ENCODE measurements at regions of chr3 and their contacts with region 1.

Region 1: DNA sequence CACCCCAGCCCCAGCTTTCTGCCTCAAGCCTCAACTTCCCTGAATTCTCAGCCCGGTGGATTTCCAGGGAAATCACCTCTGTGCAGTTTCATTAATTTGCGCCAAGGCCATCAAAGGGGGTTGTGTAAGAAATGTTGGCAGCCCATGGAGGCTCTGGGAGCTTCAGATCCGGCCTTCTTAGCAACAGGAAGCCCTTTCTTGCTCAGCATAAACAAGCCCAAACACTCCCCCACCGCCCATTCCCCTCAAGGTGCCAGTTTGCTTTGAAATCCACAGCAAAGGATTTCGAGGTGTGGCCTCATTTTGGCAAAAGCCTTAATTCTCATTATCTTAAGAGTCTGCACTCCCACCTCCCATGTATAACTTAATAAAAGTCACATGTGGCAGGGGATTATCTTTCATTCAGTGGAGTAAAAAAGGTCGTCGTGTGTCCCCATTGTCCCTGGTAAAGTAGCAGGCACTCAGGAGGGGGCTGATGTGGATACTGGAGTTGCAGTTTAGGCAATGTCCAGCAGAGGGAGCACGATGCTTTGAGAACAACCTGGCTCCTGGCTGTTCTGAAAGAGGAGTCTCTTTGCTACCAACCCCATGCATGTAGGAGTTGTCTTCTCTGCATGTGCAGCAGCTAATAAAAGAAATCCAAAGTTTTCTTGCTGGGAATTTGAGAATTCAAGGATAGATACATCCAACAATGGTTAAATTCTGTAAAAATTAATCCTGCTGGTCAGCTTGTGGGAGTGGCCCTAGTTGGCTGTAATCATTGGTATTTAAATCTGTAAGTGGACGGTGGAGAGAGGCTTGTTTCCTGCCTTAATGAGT is 39.5 kb downstream of the EBLN2 start:
- DNase-seq: peak; percentile 89
- H3K4me3 ChIP-seq: no peak overlapping the region
- H3K27ac ChIP-seq: no peak overlapping the region
- H3K4me1 ChIP-seq: no peaks in the 10 kb centered on the region
- H3K27me3 ChIP-seq: no peaks in the 10 kb centered on the region
- CTCF ChIP-seq: peak; percentile 94

Region 2: GRCh38 chr3:72903004-72903403 is 197.9 kb before region 1 on chr3:
- intact Hi-C with region 1: no loop called
- DNase-seq: no peak
- H3K4me3 ChIP-seq: no peak overlapping the region
- H3K27ac ChIP-seq: no peak overlapping the region
- H3K4me1 ChIP-seq: no peaks in the 10 kb centered on the region
- H3K27me3 ChIP-seq: no peaks in the 10 kb centered on the region
- CTCF ChIP-seq: no peak

Region 3: GRCh38 chr3:73319179-73319769 is 218.3 kb after region 1 on chr3:
- intact Hi-C with region 1: no loop called
- DNase-seq: peak; percentile 49
- H3K4me3 ChIP-seq: no peak overlapping the region
- H3K27ac ChIP-seq: no peak overlapping the region
- H3K4me1 ChIP-seq: no peaks in the 10 kb centered on the region
- H3K27me3 ChIP-seq: no peaks in the 10 kb centered on the region
- CTCF ChIP-seq: no peak

Region 4: DNA sequence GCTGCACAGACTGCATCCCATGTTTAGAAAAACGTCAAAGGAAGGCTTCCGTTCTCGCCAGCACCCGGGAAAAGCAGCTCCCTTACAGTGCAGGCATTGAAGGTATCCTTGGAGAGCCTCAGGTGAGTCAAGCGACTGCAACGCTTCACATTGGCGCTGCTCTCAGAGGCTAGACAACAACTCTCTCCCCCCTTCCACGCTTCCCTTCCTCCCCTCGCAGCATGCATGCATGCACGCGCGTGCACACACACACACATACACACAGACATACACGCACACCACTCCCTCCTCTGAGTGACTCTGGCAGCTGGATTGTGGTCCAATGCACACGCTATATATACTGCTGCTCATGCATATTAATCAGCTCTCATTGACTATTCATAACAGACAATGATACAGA is 332.7 kb after region 1 on chr3:
- intact Hi-C with region 1: loop called (anchors 2 kb)
- DNase-seq: no peak
- H3K4me3 ChIP-seq: no peak overlapping the region
- H3K27ac ChIP-seq: no peak overlapping the region
- H3K4me1 ChIP-seq: no peaks in the 10 kb centered on the region
- H3K27me3 ChIP-seq: no peaks in the 10 kb centered on the region
- CTCF ChIP-seq: no peak

Region 5: DNA sequence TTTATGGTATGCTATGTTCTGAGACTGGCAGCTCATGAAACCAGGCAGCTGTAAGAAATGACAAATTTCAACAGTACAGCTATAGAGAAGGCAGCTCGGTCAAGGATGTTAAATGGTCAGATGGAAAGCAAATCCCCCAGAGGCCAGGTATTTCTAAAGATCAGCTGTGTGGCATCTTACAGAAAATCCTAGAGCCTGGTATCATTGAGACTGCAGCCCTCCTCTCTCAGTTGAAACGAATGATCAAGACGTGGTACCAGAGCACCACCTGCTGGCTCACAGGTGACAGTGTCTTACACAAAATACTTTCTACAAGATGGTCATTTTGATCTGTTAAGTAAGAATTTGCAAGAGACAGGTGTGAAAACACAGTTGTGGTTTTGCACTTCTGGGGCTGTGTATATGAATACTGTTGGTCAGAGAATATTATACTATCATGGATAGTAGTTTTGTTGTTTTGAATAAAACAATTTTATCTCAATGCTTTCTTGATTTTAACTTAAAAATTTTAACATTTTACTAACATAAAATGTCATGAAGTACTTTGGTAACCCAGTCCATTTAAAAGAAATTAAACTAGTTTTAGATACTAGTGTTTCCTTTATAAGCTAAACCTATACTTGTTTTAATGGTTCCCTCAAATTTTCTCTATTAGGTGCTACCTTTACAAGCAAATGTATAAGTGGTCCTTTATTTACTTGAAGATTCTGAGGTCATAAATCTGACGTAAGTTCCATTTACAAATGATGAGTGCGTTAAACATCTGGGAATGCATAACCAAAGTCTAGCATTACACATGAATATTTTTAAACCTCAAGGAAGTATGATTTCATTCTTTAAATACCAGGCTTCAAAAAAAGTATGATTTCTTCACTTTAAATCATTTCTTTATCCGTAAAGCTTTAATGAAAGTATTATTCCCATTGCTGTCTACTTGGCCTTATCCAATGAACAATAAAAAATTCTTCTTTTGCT is 401.9 kb after region 1 on chr3:
- intact Hi-C with region 1: loop called (anchors 5 kb)
- DNase-seq: peak; percentile 67
- H3K4me3 ChIP-seq: no peak overlapping the region
- H3K27ac ChIP-seq: no peak overlapping the region
- H3K4me1 ChIP-seq: peaks cover 7% of the 10 kb centered on the region
- H3K27me3 ChIP-seq: no peaks in the 10 kb centered on the region
- CTCF ChIP-seq: peak; percentile 74

Region 6: GRCh38 chr3:73848173-73848906 is 747.4 kb after region 1 on chr3:
- intact Hi-C with region 1: loop called (anchors 5 kb)
- DNase-seq: no peak
- H3K4me3 ChIP-seq: no peak overlapping the region
- H3K27ac ChIP-seq: no peak overlapping the region
- H3K4me1 ChIP-seq: no peaks in the 10 kb centered on the region
- H3K27me3 ChIP-seq: no peaks in the 10 kb centered on the region
- CTCF ChIP-seq: peak; percentile 61